ENCODE measurements at regions of chr4 and their contacts with region 1.

Region 1: DNA sequence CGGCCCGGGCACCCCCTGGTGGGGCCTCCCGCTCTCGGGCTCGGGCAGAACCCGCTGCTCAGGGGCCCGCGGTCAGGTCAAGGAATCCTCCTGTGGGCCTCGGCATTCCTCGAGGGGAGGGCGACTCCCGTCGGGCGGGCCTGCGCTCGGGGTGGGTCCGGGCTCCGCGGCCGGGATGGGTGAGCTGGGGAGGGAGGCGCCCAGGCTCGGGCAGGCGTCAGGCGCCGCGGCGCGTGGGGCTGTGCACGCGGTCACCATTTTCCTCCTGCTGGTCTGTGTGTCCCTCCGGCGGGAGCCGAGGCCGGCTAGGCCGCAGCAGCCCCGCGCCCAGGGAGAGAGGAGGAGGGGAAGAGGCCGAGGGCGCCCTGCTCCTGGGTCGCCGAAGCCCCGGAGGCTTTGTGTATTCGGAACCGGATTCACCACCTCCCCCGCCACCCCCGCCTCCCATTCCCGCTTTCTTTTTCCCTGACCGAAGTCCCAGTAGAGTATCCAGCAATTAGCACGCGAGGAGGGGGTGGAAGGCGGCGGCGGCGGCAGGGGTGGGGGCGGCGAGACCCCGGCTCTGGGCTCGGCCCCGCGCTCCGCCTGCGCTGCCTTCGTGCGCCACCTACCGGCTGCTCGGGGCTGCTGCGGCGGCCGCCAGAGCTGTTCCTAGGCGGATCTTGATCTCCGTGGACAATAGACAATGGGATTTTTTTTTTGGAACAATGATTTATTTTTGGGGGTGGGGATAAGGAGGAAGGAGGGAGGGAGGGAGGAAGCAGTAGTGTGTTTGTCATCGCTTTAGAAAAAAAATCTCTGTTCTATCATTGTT is 99.0 kb upstream of the MAML3 start:
- DNase-seq: peak; percentile 60
- H3K4me3 Mint-ChIP-seq: peak overlapping the region; percentile 59
- H3K27ac Mint-ChIP-seq: no peak overlapping the region
- H3K4me1 Mint-ChIP-seq: peaks cover 22% of the 10 kb centered on the region
- H3K27me3 Mint-ChIP-seq: no peaks in the 10 kb centered on the region
- CTCF ChIP-seq: peak; percentile 97

Region 2: GRCh38 chr4:139734875-139735380 is 518.0 kb before region 1 on chr4:
- CTCF ChIA-PET with region 1: interaction called, 7 read pairs
- POLR2A ChIA-PET with region 1: interaction called, 9 read pairs
- intact Hi-C with region 1: loop called (anchors 2 kb)
- DNase-seq: peak; percentile 35
- H3K4me3 Mint-ChIP-seq: peak overlapping the region; percentile 28
- H3K27ac Mint-ChIP-seq: no peak overlapping the region
- H3K4me1 Mint-ChIP-seq: peaks cover 6% of the 10 kb centered on the region
- H3K27me3 Mint-ChIP-seq: no peaks in the 10 kb centered on the region
- CTCF ChIP-seq: peak; percentile 52

Region 3: GRCh38 chr4:139887962-139888735 is 364.8 kb before region 1 on chr4:
- CTCF ChIA-PET with region 1: no interaction called
- POLR2A ChIA-PET with region 1: interaction called, 7 read pairs
- intact Hi-C with region 1: loop called (anchors 5 kb)
- DNase-seq: peak; percentile 84
- H3K4me3 Mint-ChIP-seq: peak overlapping the region; percentile 6
- H3K27ac Mint-ChIP-seq: peak overlapping the region; percentile 51
- H3K4me1 Mint-ChIP-seq: peaks cover 39% of the 10 kb centered on the region
- H3K27me3 Mint-ChIP-seq: no peaks in the 10 kb centered on the region
- CTCF ChIP-seq: no peak

Region 4: DNA sequence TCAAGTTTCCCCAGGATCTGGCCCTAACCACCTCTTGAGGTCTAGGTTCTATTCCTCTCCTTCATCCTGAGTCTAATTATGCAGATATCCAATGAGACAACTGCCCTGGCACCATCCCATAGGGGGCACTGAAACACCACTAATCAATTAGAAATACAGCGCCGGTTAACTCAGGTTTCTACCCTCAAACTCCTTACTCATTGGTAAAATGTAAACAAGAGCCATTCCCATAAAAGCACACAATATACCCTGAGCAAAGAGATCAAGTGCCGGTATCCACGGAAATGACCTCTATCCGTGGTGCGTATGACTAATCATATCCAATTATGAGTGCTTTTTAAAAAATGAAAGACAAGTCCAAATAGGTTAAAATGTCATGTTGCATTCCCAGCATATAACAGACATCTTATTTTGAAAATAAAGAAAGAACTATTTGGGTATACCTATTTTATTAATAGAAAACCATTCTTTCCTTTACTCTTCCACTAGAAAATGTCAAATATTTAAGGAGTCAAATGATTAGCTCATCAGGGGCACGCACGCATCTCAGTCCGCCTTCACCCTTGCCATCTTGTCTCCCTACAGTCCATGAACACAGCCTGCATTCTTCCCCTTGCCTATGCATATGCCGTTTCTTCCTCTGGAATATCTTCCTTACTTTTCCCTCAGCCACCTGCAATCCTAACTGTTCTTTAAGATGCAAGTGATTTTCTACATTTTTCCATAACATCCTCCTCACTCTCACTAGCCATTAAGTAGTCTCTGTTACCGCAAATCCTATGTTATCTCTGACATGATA is 240.1 kb before region 1 on chr4:
- CTCF ChIA-PET with region 1: interaction called, 4 read pairs
- POLR2A ChIA-PET with region 1: no interaction called
- intact Hi-C with region 1: loop called (anchors 1 kb)
- DNase-seq: peak; percentile 86
- H3K4me3 Mint-ChIP-seq: no peak overlapping the region
- H3K27ac Mint-ChIP-seq: peak overlapping the region; percentile 0
- H3K4me1 Mint-ChIP-seq: peaks cover 7% of the 10 kb centered on the region
- H3K27me3 Mint-ChIP-seq: no peaks in the 10 kb centered on the region
- CTCF ChIP-seq: peak; percentile 47

Region 5: DNA sequence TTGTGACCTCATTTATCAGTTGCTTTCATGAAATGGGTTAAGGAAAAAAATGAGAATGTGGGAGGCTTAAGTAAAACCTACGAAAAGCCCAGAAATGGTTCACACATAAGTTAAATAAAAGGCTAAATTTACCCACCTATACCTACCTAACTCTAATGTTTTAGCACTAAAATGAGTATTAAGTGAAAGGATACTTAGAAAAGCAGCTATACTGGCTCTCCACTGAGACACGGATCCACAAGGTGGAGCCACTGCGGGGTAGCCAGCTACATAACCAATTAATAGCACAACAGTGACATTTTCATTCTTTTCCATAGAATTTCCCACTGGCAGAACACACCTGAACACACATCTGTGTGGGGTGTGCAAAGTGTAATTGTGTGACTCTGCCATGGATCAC is 200.9 kb before region 1 on chr4:
- CTCF ChIA-PET with region 1: interaction called, 15 read pairs
- POLR2A ChIA-PET with region 1: interaction called, 4 read pairs
- intact Hi-C with region 1: loop called (anchors 1 kb)
- DNase-seq: peak; percentile 47
- H3K4me3 Mint-ChIP-seq: no peak overlapping the region
- H3K27ac Mint-ChIP-seq: no peak overlapping the region
- H3K4me1 Mint-ChIP-seq: peaks cover 13% of the 10 kb centered on the region
- H3K27me3 Mint-ChIP-seq: no peaks in the 10 kb centered on the region
- CTCF ChIP-seq: peak; percentile 57

Region 6: DNA sequence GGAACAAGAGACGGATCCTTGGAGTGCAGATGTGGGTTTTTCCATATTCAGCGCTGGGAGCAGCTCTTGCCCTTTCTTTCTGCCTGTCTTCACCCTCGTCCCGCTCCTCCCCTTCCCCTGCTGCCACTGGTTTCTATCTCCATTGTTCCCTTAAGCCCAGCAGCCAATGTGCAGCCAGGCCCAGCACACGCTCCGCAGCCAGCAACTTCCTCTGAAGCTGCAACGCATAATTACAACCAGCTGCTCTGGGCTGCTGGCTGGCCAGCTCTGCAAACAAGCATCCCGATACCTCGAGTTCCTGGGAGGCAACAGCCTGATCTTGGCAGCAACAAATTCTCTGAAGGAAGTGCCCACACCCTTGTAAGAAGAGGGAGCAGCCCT is 15.4 kb before region 1 on chr4:
- CTCF ChIA-PET with region 1: interaction called, 12 read pairs
- POLR2A ChIA-PET with region 1: interaction called, 9 read pairs
- intact Hi-C with region 1: no loop called
- DNase-seq: peak; percentile 46
- H3K4me3 Mint-ChIP-seq: peak overlapping the region; percentile 35
- H3K27ac Mint-ChIP-seq: peak overlapping the region; percentile 24
- H3K4me1 Mint-ChIP-seq: peaks cover 23% of the 10 kb centered on the region
- H3K27me3 Mint-ChIP-seq: no peaks in the 10 kb centered on the region
- CTCF ChIP-seq: no peak

Region 7: DNA sequence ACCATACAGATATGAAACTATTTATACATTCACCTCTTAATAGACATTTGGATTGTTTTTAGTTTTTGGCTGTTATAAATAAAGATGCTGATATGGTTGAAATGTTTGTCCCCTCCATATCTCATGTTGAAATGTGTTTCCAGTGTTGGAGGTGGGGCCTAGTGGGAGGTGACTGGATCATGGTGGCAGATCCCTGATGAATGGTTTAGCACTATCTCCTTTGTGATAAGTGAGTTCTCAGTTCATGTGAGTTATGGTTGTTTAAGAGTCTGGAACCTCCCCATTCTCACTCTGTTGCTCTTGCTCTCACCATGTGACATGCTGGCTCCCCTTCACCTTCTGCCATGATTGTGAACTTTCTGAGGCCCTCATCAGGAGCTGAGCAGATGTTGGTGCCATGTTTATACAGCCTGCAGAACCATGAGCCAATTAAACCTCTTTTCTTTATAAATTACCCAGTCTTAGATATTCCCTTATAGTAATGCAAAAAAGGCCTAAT is 186.7 kb after region 1 on chr4:
- CTCF ChIA-PET with region 1: no interaction called
- POLR2A ChIA-PET with region 1: no interaction called
- intact Hi-C with region 1: no loop called
- DNase-seq: no peak
- H3K4me3 Mint-ChIP-seq: no peak overlapping the region
- H3K27ac Mint-ChIP-seq: no peak overlapping the region
- H3K4me1 Mint-ChIP-seq: no peaks in the 10 kb centered on the region
- H3K27me3 Mint-ChIP-seq: no peaks in the 10 kb centered on the region
- CTCF ChIP-seq: no peak

Region 8: GRCh38 chr4:140609548-140610425 is 356.8 kb after region 1 on chr4:
- CTCF ChIA-PET with region 1: interaction called, 4 read pairs
- POLR2A ChIA-PET with region 1: no interaction called
- intact Hi-C with region 1: loop called (anchors 10 kb)
- DNase-seq: peak; percentile 66
- H3K4me3 Mint-ChIP-seq: no peak overlapping the region
- H3K27ac Mint-ChIP-seq: no peak overlapping the region
- H3K4me1 Mint-ChIP-seq: peaks cover 6% of the 10 kb centered on the region
- H3K27me3 Mint-ChIP-seq: no peaks in the 10 kb centered on the region
- CTCF ChIP-seq: peak; percentile 70

Measured in MCF 10A (cell line).